Caco-2 (cell line): ENCODE measurements at regions of chr12 and their contacts with region 1.

Region 1: DNA sequence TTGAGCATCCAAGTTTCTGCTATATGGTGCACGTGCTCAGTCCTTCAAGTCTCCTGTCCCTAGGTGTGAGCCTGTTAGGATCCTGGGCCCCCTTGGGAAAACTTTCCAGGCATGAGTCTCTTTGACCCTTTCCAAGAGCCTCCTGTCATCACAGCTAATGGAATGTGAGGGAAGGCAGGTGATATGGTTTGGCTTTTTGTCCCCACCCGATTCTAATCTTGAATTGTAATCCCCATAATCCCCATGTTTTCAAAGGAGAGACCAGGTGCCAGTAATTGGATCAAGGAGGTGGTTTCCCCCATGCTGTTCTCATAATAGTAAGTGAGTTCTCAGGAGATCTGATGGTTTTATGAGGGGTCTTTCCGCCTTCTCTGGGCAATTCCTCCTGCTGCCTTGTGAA is 265.5 kb downstream of the ATP23 start:
- DNase-seq: peak; percentile 31 to 42
- H3K4me3 ChIP-seq: no peak overlapping the region
- H3K4me3 Mint-ChIP-seq: no peak overlapping the region
- H3K27ac Mint-ChIP-seq: peak overlapping the region; percentile 7
- H3K4me1 ChIP-seq: peaks cover 11% of the 10 kb centered on the region
- H3K4me1 Mint-ChIP-seq: peaks cover 7% of the 10 kb centered on the region
- H3K27me3 ChIP-seq: no peaks in the 10 kb centered on the region
- H3K27me3 Mint-ChIP-seq: no peaks in the 10 kb centered on the region
- CTCF ChIP-seq: no peak

Region 2: DNA sequence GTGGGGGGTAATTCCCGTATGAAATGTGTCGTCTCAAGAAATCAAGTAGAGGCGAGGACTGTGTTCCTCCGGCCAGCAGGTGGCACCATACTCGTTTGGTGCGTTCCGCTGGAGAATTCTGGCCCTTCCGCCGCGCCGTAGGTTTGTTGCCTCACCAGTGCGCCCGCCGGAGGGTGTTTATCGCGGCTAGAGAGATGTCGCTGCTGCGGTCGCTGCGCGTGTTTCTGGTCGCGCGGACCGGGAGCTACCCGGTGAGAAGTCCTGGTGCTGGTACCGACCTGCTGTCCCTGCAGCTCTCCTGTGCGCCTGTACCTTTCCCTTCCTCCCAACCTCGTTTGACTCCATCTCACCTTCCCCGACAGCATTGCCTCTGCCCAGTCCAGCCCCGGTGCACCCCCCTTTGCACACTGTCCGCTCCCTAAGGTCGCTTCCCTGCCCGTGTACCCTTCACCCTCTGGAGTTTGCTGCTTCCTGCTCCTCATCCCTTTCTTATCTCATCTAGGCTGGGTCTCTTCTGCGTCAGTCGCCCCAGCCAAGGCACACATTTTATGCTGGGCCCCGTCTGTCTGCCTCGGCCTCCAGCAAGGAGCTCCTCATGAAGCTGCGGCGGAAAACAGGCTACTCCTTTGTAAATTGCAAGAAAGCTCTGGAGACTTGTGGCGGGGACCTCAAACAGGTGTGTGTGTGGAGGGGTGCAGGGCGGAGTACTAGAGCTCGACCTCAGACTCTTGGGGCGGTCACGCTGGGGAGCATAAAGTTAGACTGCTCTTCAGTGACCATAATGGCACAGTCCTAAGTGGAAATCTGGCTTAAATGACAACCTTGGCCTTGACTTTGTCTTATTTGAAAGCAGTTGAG is 424.0 kb before region 1 on chr12 and contains the start of gene TSFM:
- CTCF ChIA-PET with region 1: no interaction called
- POLR2A ChIA-PET with region 1: no interaction called
- intact Hi-C with region 1: no loop called
- DNase-seq: peak; percentile 93 to 94
- H3K4me3 ChIP-seq: peak within 1 kb of the TSS; percentile 99
- H3K4me3 Mint-ChIP-seq: peak within 1 kb of the TSS; percentile 92
- H3K27ac Mint-ChIP-seq: peak within 1 kb of the TSS; percentile 91
- H3K4me1 ChIP-seq: no peaks in the 10 kb centered on the region
- H3K4me1 Mint-ChIP-seq: no peaks in the 10 kb centered on the region
- H3K27me3 ChIP-seq: no peaks in the 10 kb centered on the region
- H3K27me3 Mint-ChIP-seq: no peaks in the 10 kb centered on the region
- CTCF ChIP-seq: peak; percentile 74 to 81
- total RNA-seq, gene TSFM: 48.0 and 57.5 TPM in 2 replicates

Region 3: DNA sequence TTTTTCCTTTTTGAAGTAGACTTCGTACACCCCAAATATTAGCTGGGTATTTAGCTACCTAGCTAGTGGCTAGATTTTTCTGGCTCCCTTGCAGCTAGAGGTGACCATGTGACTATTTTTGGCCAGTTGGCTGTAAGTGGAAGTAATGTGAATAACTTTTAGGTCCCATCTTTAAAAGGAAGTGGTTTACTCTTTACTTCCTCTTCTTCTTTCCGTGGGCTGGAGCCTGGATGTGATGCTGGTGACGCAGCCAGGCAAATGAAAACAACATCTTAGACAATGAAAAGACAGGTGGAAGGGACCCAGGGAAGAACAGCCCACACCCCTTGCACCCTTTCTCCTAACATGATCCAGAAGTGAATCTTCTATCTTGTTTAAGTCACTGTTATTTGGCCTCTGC is 20.0 kb before region 1 on chr12:
- CTCF ChIA-PET with region 1: no interaction called
- POLR2A ChIA-PET with region 1: no interaction called
- intact Hi-C with region 1: no loop called
- DNase-seq: no peak
- H3K4me3 ChIP-seq: no peak overlapping the region
- H3K4me3 Mint-ChIP-seq: no peak overlapping the region
- H3K27ac Mint-ChIP-seq: no peak overlapping the region
- H3K4me1 ChIP-seq: no peaks in the 10 kb centered on the region
- H3K4me1 Mint-ChIP-seq: no peaks in the 10 kb centered on the region
- H3K27me3 ChIP-seq: no peaks in the 10 kb centered on the region
- H3K27me3 Mint-ChIP-seq: no peaks in the 10 kb centered on the region
- CTCF ChIP-seq: no peak

Region 4: GRCh38 chr12:58225203-58225877 is 18.5 kb after region 1 on chr12:
- CTCF ChIA-PET with region 1: no interaction called
- POLR2A ChIA-PET with region 1: no interaction called
- intact Hi-C with region 1: loop called (anchors 1 kb)
- DNase-seq: peak in 1 of 2 experiments; percentile 27
- H3K4me3 ChIP-seq: no peak overlapping the region
- H3K4me3 Mint-ChIP-seq: no peak overlapping the region
- H3K27ac Mint-ChIP-seq: no peak overlapping the region
- H3K4me1 ChIP-seq: peaks cover 18% of the 10 kb centered on the region
- H3K4me1 Mint-ChIP-seq: peaks cover 7% of the 10 kb centered on the region
- H3K27me3 ChIP-seq: no peaks in the 10 kb centered on the region
- H3K27me3 Mint-ChIP-seq: no peaks in the 10 kb centered on the region
- CTCF ChIP-seq: no peak